CD8-positive, alpha-beta T cell (primary cell): ENCODE measurements at regions of chr14 and their contacts with region 1.

Region 1: GRCh38 chr14:29940482-29940881 is 12.8 kb upstream of the PRKD1 start:
- DNase-seq: no peak
- ATAC-seq: no peak
- H3K4me3 ChIP-seq: no peak overlapping the region
- H3K4me3 Mint-ChIP-seq: no peak overlapping the region
- H3K27ac ChIP-seq: no peak overlapping the region
- H3K27ac Mint-ChIP-seq: no peak overlapping the region
- H3K4me1 ChIP-seq: no peaks in the 10 kb centered on the region
- H3K4me1 Mint-ChIP-seq: no peaks in the 10 kb centered on the region
- H3K27me3 ChIP-seq: no peaks in the 10 kb centered on the region
- H3K27me3 Mint-ChIP-seq: no peaks in the 10 kb centered on the region
- CTCF ChIP-seq: no peak

Region 2: GRCh38 chr14:29403091-29403490 is 537.4 kb before region 1 on chr14:
- CTCF ChIA-PET with region 1: no interaction called
- POLR2A ChIA-PET with region 1: no interaction called
- intact Hi-C with region 1: no loop called
- DNase-seq: no peak
- ATAC-seq: no peak
- H3K4me3 ChIP-seq: no peak overlapping the region
- H3K4me3 Mint-ChIP-seq: no peak overlapping the region
- H3K27ac ChIP-seq: no peak overlapping the region
- H3K27ac Mint-ChIP-seq: no peak overlapping the region
- H3K4me1 ChIP-seq: no peaks in the 10 kb centered on the region
- H3K4me1 Mint-ChIP-seq: no peaks in the 10 kb centered on the region
- H3K27me3 ChIP-seq: no peaks in the 10 kb centered on the region
- H3K27me3 Mint-ChIP-seq: no peaks in the 10 kb centered on the region
- CTCF ChIP-seq: no peak

Region 3: GRCh38 chr14:29927376-29928116 is 12.9 kb before region 1 on chr14 and contains the start of gene PRKD1:
- CTCF ChIA-PET with region 1: no interaction called
- POLR2A ChIA-PET with region 1: no interaction called
- intact Hi-C with region 1: loop called in 1 of 2 experiments (anchors 1 kb)
- DNase-seq: no peak
- ATAC-seq: no peak
- H3K4me3 ChIP-seq: no peak within 1 kb of the TSS
- H3K4me3 Mint-ChIP-seq: peak within 1 kb of the TSS; percentile 38
- H3K27ac ChIP-seq: no peak within 1 kb of the TSS
- H3K27ac Mint-ChIP-seq: no peak within 1 kb of the TSS
- H3K4me1 ChIP-seq: no peaks in the 10 kb centered on the region
- H3K4me1 Mint-ChIP-seq: peaks cover 8% of the 10 kb centered on the region
- H3K27me3 ChIP-seq: peaks cover 0 to 12% of the 10 kb centered on the region in 2 experiments
- H3K27me3 Mint-ChIP-seq: peaks cover 36% of the 10 kb centered on the region
- CTCF ChIP-seq: no peak
- total RNA-seq, gene PRKD1: not detected

Region 4: DNA sequence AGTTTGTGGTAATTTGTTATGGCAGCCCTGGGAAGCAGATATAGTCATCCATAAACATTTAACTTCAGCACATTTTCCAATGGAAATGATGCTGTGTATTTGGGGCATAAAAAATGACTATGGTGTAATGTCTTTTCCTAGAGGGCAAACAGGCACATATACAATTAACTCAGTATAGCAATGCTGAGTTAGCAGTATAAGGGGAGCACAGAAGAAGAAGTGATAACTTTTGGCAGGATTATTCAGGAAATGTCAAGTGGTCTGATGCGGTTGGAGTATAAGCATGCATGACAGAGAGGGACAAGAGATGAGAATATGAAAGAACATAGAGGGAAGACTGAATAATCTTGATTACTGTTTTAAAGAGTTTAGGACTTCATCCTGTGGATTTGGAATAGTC is 42.5 kb after region 1 on chr14:
- CTCF ChIA-PET with region 1: no interaction called
- POLR2A ChIA-PET with region 1: no interaction called
- intact Hi-C with region 1: no loop called
- DNase-seq: no peak
- ATAC-seq: no peak
- H3K4me3 ChIP-seq: no peak overlapping the region
- H3K4me3 Mint-ChIP-seq: no peak overlapping the region
- H3K27ac ChIP-seq: no peak overlapping the region
- H3K27ac Mint-ChIP-seq: no peak overlapping the region
- H3K4me1 ChIP-seq: no peaks in the 10 kb centered on the region
- H3K4me1 Mint-ChIP-seq: no peaks in the 10 kb centered on the region
- H3K27me3 ChIP-seq: no peaks in the 10 kb centered on the region
- H3K27me3 Mint-ChIP-seq: no peaks in the 10 kb centered on the region
- CTCF ChIP-seq: no peak